Kidney (tissue), 22 donors: ENCODE measurements at regions of chr6 and their contacts with region 1.

Region 1: GRCh38 chr6:12605888-12606345 is 110.7 kb upstream of the PHACTR1 start:
- DNase-seq: peak in 4 of 5 donors; percentile 42 to 84 (median 67)
- H3K4me3 ChIP-seq: no peak overlapping the region
- H3K27ac ChIP-seq: no peak overlapping the region
- H3K4me1 ChIP-seq: peaks cover 0 to 4% (median 0%) of the 10 kb centered on the region in 3 donors
- H3K27me3 ChIP-seq: no peaks in the 10 kb centered on the region
- CTCF ChIP-seq: peak; percentile 66

Region 2: DNA sequence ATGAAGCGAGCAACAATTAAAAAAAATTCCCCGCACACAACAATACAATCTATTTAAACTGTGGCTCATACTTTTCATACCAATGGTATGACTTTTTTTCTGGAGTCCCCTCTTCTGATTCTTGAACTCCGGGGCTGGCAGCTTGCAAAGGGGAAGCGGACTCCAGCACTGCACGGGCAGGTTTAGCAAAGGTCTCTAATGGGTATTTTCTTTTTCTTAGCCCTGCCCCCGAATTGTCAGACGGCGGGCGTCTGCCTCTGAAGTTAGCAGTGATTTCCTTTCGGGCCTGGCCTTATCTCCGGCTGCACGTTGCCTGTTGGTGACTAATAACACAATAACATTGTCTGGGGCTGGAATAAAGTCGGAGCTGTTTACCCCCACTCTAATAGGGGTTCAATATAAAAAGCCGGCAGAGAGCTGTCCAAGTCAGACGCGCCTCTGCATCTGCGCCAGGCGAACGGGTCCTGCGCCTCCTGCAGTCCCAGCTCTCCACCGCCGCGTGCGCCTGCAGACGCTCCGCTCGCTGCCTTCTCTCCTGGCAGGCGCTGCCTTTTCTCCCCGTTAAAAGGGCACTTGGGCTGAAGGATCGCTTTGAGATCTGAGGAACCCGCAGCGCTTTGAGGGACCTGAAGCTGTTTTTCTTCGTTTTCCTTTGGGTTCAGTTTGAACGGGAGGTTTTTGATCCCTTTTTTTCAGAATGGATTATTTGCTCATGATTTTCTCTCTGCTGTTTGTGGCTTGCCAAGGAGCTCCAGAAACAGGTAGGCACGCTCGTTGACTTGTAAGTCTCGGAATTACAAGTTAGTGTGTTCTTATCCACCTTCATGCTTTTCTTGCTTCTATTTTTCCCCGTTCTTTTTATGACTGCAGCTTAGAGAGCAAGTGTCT is 315.7 kb before region 1 on chr6 and contains the start of gene EDN1:
- intact Hi-C with region 1: loop called (anchors 10 kb)
- DNase-seq: peak; percentile 77 to 92 (median 89)
- H3K4me3 ChIP-seq: peak within 1 kb of the TSS; percentile 59 to 81 (median 72)
- H3K27ac ChIP-seq: peak within 1 kb of the TSS; percentile 46 to 70
- H3K4me1 ChIP-seq: peaks cover 0 to 16% (median 0%) of the 10 kb centered on the region in 3 donors
- H3K27me3 ChIP-seq: peaks cover 7% of the 10 kb centered on the region
- CTCF ChIP-seq: peak; percentile 61
- total RNA-seq, gene EDN1: 16.6 TPM